ENCODE measurements at regions of chr3 and their contacts with region 1.

Region 1: DNA sequence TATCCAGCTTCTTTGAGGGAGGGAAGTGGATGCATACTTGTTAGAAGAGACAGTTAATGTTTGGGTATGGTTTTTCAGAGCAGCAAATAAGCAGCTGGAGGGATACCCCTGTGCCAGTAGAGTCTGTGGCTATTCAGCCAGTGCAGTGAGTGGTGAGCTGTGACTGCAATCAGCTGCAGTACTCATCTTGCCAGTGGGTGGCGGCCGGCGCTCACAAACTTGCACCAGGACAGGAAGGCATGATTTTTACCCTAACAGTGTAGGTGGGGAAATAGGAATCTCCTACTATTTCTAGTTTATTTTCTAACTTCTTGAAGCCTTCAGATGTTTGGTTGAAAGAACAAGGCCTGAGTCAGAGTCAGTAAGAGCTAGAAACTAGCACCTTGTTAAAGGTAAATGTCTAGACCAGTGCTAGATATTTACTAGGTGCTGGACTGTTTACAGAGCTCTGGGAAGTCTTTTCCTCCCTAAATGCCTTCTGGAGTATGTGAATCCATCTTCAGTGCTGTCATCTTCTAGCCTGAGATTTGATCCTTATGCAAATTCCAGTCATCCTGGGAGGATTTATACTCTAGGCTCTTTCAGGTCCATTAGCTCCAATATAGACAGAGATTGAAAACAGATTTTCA is 23.6 kb downstream of the TIMP4 start:
- DNase-seq: peak; percentile 81
- H3K4me3 ChIP-seq: no peak overlapping the region
- H3K27ac ChIP-seq: no peak overlapping the region
- H3K4me1 ChIP-seq: no peaks in the 10 kb centered on the region
- H3K27me3 ChIP-seq: no peaks in the 10 kb centered on the region
- CTCF ChIP-seq: peak; percentile 85

Region 2: GRCh38 chr3:12484198-12484974 is 349.2 kb after region 1 on chr3 and contains the start of gene TSEN2:
- intact Hi-C with region 1: loop called (anchors 5 kb)
- DNase-seq: peak; percentile 93
- H3K4me3 ChIP-seq: peak within 1 kb of the TSS; percentile 72
- H3K27ac ChIP-seq: peak within 1 kb of the TSS; percentile 75
- H3K4me1 ChIP-seq: peaks cover 19% of the 10 kb centered on the region
- H3K27me3 ChIP-seq: no peaks in the 10 kb centered on the region
- CTCF ChIP-seq: no peak
- total RNA-seq, gene TSEN2: 13.7 to 21.1 TPM

Measured in colonic mucosa (tissue), 4 donors.